ENCODE measurements at regions of chr12 and their contacts with region 1.

Region 1: DNA sequence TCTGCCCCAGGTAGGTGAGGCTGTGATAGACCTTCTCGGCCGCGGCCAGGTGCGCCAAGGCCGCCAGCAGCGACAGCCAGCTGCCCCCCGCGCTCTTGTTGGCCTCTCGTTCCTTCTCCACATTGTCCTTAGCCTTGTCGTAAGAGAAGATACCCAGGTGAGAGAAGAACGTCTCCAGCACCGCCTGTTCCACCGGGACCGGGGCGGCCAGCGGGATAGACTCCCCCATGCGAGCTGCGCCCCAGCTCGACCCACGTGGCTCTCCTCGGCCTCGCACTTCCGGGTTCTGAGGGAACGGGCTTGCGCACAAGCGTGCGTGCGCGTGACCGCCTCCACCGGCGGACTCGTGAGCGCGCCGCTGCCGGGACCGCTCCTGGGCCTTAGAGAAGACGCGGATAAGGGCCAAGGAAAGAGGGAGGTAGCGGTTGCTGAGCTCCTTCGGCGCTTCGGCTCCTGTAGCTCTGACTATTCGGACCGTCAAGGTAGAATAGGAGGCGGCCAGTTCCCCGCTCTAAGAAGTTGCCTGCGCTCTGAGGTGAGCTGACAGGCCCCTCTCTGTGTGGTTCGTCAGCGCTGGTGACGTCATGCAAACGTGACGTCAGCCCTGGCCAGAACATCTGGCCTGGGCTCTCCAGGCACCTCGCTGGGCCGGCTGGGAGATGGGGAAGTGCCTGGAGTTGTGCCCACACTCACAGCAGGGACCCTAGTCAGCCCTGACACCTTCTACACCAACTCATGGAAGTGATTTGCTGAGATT is at the start of gene KICS2:
- DNase-seq: peak; percentile 93
- H3K4me3 ChIP-seq: peak within 1 kb of the TSS; percentile 79 to 94 (median 85)
- H3K27ac ChIP-seq: peak within 1 kb of the TSS; percentile 91
- H3K4me1 ChIP-seq: peaks cover 11% of the 10 kb centered on the region
- H3K27me3 ChIP-seq: no peaks in the 10 kb centered on the region
- CTCF ChIP-seq: no peak
- total RNA-seq, gene KICS2: 10.7 to 14.5 TPM

Region 2: GRCh38 chr12:64103825-64104740 is 118.1 kb before region 1 on chr12:
- CTCF ChIA-PET with region 1: no interaction called
- dilution Hi-C with region 1: no loop called
- in situ Hi-C with region 1: no loop called
- intact Hi-C with region 1: loop called (anchors 5 kb)
- DNase-seq: peak; percentile 93
- H3K4me3 ChIP-seq: no peak overlapping the region
- H3K27ac ChIP-seq: peak overlapping the region; percentile 73
- H3K4me1 ChIP-seq: peaks cover 56% of the 10 kb centered on the region
- H3K27me3 ChIP-seq: no peaks in the 10 kb centered on the region
- CTCF ChIP-seq: no peak

Measured in mammary epithelial cell (primary cell).